SK-N-SH (cell line): ENCODE measurements at regions of chr1 and their contacts with region 1.

Region 1: GRCh38 chr1:999725-1000356 is at the start of gene HES4:
- DNase-seq: peak; percentile 73
- H3K4me3 ChIP-seq: peak within 1 kb of the TSS; percentile 33 to 37; a peak in 3 of 4 replicates
- H3K27ac ChIP-seq: peak within 1 kb of the TSS in 1 of 2 experiments; percentile 39; a peak in 2 of 4 replicates
- H3K4me1 ChIP-seq: peaks cover 0 to 27% of the 10 kb centered on the region in 2 experiments; a peak in 1 of 4 replicates
- H3K27me3 ChIP-seq: peaks cover 12% of the 10 kb centered on the region; the same call in 1 of the 2 replicates
- CTCF ChIP-seq: no peak
- EP300 ChIP-seq: no peak
- RAD21 ChIP-seq: no peak
- polyA plus RNA-seq, gene HES4: 4.2 and 4.7 TPM in 2 replicates

Region 2: DNA sequence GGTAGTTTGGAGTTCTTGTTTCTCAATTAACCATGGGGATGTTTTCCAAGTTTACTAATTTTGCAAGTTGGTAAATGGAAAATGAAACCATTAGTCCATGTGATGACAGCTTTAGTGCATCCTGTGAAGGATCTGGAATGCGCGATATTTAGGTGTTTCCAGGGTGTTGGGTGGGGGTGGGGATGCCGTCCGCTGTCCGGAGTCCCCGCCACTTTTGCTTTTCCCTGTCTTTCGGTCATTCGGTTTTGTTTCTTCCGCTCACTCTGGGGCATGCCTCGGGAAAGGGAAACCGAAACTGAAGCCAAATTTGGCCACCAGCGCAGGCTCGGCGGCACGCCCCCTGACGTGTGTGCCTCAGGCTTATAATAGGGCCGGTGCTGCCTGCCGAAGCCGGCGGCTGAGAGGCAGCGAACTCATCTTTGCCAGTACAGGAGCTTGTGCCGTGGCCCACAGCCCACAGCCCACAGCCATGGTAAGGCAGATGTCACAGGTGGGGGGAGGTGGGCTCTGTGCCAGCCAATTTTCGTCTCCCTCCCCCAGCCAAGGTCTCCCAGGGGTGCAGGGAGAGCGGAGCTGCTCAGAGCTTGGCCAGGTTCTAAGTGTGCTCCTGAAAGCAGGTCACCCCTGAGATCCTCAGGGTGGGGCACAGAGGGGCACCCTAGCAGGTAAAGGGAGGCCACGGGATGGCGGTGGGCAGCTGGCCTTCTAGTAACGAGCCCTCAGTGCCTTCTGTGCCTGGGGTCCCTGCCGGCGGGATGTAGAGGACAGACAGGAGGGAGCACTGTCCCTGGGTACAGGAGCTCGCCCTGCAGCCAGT is 13.5 kb after region 1 on chr1 and contains the start of gene ISG15:
- CTCF ChIA-PET with region 1: interaction called, 38 read pairs
- POLR2A ChIA-PET with region 1: interaction called, 3 read pairs
- DNase-seq: no peak
- H3K4me3 ChIP-seq: peak within 1 kb of the TSS; percentile 45 to 52; a peak in 3 of 4 replicates
- H3K27ac ChIP-seq: peak within 1 kb of the TSS in 1 of 2 experiments; percentile 70; a peak in 2 of 4 replicates
- H3K4me1 ChIP-seq: peaks cover 0 to 7% of the 10 kb centered on the region in 2 experiments; a peak in 1 of 4 replicates
- H3K27me3 ChIP-seq: no peaks in the 10 kb centered on the region
- CTCF ChIP-seq: no peak
- EP300 ChIP-seq: no peak
- RAD21 ChIP-seq: no peak
- polyA plus RNA-seq, gene ISG15: 22.9 and 28.6 TPM in 2 replicates

Region 3: GRCh38 chr1:1033009-1033587 is 33.3 kb after region 1 on chr1:
- CTCF ChIA-PET with region 1: interaction called, 37 read pairs
- POLR2A ChIA-PET with region 1: no interaction called
- DNase-seq: peak; percentile 97
- H3K4me3 ChIP-seq: peak overlapping the region; percentile 44 to 47; a peak in 3 of 4 replicates
- H3K27ac ChIP-seq: no peak overlapping the region
- H3K4me1 ChIP-seq: peaks cover 0 to 11% of the 10 kb centered on the region in 2 experiments; a peak in 1 of 4 replicates
- H3K27me3 ChIP-seq: no peaks in the 10 kb centered on the region
- CTCF ChIP-seq: peak; percentile 63
- EP300 ChIP-seq: no peak
- RAD21 ChIP-seq: peak; percentile 83

Region 4: DNA sequence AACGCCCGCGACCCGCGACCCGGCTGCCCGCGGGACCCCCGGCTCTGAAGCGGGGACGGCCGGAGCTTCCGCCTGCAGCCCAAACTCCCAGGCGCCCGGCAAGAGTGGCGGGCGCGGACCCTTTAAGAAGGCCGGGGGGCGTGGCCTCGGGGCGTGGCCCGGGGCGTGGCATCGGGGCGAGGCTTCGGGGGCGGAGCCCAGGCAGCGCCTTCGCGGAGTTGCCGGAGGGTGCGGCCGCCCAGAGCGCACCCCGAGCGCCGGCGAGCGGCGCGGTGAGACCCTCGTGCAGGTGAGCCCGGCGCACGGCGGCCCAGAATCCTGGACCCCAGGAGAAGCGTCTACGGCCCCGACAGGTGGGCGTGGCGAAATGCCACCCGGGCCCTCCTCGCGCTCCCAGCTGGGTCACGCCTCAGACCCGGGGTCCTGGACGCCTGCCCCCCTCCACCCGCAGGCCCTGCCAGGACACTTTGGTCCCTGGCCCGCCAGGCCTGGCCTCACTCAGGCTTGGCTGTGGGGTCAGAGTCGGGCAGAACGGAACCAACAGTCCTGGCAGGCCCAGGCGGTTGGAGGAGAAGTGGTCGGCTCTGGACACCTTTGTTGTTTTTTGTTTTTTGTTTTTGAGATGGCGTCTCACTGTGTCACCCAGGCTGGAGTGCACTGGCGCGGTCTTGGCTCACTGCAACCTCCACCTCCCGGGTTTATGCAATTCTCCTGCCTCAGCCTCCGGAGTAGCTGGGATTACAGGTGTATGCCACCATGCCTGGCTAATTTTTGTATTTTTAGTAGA is 59.8 kb after region 1 on chr1:
- CTCF ChIA-PET with region 1: interaction called, 44 read pairs
- POLR2A ChIA-PET with region 1: no interaction called
- DNase-seq: peak; percentile 96
- H3K4me3 ChIP-seq: peak overlapping the region; percentile 51 to 56
- H3K27ac ChIP-seq: no peak overlapping the region
- H3K4me1 ChIP-seq: peaks cover 0 to 6% of the 10 kb centered on the region in 2 experiments; a peak in 1 of 4 replicates
- H3K27me3 ChIP-seq: peaks cover 20% of the 10 kb centered on the region; the same call in 1 of the 2 replicates
- CTCF ChIP-seq: no peak
- EP300 ChIP-seq: no peak
- RAD21 ChIP-seq: no peak

Region 5: GRCh38 chr1:1318131-1318652 is 318.4 kb after region 1 on chr1:
- CTCF ChIA-PET with region 1: no interaction called
- POLR2A ChIA-PET with region 1: no interaction called
- DNase-seq: no peak
- H3K4me3 ChIP-seq: no peak overlapping the region
- H3K27ac ChIP-seq: peak overlapping the region in 1 of 2 experiments; percentile 86; a peak in 2 of 4 replicates
- H3K4me1 ChIP-seq: peaks cover 4 to 8% of the 10 kb centered on the region in 2 experiments; a peak in 2 of 4 replicates
- H3K27me3 ChIP-seq: no peaks in the 10 kb centered on the region
- CTCF ChIP-seq: no peak
- EP300 ChIP-seq: no peak
- RAD21 ChIP-seq: no peak